Activated naive CD4-positive, alpha-beta T cell treated with anti-CD3 and anti-CD28 coated beads for 36 hours (primary cell): ENCODE measurements at regions of chr17 and their contacts with region 1.

Region 1: GRCh38 chr17:72725433-72726068 is 366.9 kb downstream of the SLC39A11 start:
- DNase-seq: peak; percentile 68
- H3K4me3 Mint-ChIP-seq: no peak overlapping the region
- H3K27ac Mint-ChIP-seq: no peak overlapping the region
- H3K4me1 Mint-ChIP-seq: peaks cover 28% of the 10 kb centered on the region
- H3K27me3 Mint-ChIP-seq: no peaks in the 10 kb centered on the region

Region 2: DNA sequence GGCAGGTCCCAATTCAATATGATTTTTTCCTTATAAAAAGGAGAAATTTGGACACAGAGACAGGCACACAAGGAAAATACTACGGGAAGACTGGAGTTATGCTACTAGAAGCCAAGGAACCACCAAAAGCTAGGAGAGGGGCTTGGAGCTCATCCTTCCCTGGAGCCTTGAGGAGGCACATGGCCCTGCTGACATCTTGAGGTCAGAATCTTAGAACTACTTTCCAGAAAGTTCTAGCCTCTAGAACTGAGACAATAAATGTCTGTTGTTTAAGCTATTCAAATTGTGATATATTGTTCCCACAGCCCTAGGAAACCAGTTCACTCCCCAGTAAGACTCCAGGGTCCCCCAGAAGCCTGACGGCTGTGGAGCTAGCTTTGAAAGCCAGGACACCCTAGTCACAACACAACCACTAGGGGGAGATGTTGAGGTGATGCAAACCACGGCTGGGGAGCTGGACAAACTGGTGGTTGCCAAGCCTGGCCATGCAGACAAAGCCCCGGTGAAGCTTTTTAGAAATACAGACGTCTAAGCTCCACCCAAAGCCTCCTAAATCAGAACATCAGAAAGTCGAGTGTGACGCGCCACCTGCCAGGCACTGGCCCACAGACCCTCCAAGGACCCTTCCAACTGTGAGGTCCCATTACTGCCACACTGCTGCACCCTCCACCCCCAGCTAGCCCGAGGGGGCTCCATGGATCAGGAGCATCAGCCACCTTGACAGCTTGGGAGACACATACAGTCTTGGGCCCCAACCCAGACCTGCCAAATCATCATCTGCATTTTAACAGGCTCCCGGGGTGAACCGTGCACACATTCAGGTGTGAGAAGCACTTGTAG is 260.6 kb after region 1 on chr17:
- CTCF ChIA-PET with region 1: interaction called, 25 read pairs
- intact Hi-C with region 1: loop called (anchors 1 kb)
- DNase-seq: peak; percentile 70
- H3K4me3 Mint-ChIP-seq: no peak overlapping the region
- H3K27ac Mint-ChIP-seq: no peak overlapping the region
- H3K4me1 Mint-ChIP-seq: no peaks in the 10 kb centered on the region
- H3K27me3 Mint-ChIP-seq: no peaks in the 10 kb centered on the region

Region 3: DNA sequence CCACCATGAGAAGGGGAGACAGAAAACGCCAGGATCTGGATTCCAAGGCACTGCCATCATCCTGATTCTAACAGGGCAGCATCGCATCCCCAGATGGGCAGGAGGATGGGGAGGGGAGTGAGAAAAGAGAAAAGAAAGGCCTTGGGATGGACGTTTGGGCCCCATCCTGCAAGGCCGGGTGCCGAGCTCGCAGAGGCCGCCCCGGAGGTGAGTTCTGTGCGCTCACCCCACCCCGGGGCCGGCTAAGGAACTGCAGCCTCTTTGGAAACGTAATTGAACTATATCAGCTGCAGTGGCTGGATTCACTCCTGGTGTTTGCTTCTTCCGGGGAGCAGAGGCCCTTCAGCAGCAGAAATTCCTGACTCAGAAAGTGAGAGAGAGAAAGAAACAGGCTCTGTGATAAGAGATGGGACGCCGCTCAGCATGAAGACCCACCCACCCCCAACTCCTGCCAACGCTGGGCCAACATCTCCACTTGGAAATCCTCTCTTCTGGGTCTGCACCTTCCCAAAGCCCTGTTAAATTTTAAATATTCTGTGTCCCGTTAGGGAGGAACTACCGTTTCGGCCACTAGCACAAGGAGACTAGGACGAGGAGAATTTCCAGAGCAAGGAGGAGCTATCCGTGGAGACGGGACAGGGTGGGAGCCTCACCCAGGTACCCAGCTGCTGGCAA is 430.8 kb after region 1 on chr17:
- CTCF ChIA-PET with region 1: interaction called, 62 read pairs
- intact Hi-C with region 1: loop called (anchors 1 kb)
- DNase-seq: peak; percentile 68
- H3K4me3 Mint-ChIP-seq: no peak overlapping the region
- H3K27ac Mint-ChIP-seq: no peak overlapping the region
- H3K4me1 Mint-ChIP-seq: peaks cover 10% of the 10 kb centered on the region
- H3K27me3 Mint-ChIP-seq: peaks cover 11% of the 10 kb centered on the region

Region 4: DNA sequence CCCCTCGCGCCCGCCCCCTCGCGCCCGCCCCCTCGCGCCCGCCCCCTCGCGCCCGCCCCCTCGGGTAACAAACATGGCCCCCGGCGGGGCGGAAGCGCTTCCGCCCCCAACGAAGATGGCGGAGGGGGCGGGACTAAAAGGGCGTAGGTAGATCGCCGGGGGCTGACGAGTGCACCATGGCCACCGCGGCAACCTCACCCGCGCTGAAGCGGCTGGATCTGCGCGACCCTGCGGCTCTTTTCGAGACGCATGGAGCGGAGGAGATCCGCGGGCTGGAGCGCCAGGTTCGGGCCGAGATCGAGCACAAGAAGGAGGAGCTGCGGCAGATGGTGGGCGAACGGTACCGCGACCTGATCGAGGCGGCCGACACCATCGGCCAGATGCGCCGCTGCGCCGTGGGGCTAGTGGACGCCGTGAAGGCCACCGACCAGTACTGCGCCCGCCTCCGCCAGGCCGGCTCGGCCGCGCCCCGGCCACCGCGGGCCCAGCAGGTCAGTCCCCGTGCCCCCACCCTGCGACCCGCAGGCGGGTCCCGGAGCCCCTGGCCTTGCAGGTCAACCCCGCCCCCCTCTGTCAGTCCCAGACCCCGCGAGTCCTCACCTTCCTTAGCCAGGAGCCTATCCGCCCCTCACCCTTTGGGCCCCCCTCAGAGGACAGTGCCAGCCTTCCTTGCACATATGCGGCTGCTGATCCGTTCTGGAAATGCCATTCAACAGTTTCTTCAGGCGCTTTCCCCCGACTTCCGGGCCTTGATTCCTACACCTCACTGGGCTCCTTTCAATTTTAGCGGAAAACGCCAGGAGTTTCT is 467.5 kb after region 1 on chr17 and contains the start of gene COG1:
- CTCF ChIA-PET with region 1: interaction called, 8 read pairs
- intact Hi-C with region 1: loop called (anchors 1 kb)
- DNase-seq: peak; percentile 91
- H3K4me3 Mint-ChIP-seq: peak within 1 kb of the TSS; percentile 95
- H3K27ac Mint-ChIP-seq: peak within 1 kb of the TSS; percentile 97
- H3K4me1 Mint-ChIP-seq: peaks cover 16% of the 10 kb centered on the region
- H3K27me3 Mint-ChIP-seq: no peaks in the 10 kb centered on the region
- total RNA-seq, gene COG1: 31.4 to 32.1 TPM

Region 5: GRCh38 chr17:73255671-73256181 is 530.2 kb after region 1 on chr17:
- CTCF ChIA-PET with region 1: interaction called, 34 read pairs
- intact Hi-C with region 1: loop called (anchors 1 kb)
- DNase-seq: peak; percentile 68
- H3K4me3 Mint-ChIP-seq: no peak overlapping the region
- H3K27ac Mint-ChIP-seq: no peak overlapping the region
- H3K4me1 Mint-ChIP-seq: no peaks in the 10 kb centered on the region
- H3K27me3 Mint-ChIP-seq: peaks cover 2% of the 10 kb centered on the region

Region 6: DNA sequence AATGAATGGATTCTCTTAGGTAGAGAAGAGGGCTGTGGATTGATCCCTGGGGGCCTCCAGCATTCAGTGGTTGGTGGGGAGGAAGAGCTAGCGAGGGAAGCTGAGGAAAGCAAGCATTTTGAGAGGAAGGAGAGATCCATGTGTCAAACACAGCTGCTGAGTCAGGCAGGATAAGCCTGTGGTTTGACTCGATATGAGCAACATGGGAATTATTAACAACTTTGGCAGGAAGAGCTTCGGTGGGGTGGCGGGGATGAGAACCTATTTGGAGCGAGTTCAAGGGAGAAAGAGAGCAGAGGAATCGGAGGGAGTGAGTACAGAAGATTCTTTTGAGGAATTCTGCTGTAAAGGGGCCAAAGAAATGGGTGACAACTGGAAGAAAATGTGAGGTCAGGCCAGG is 645.7 kb after region 1 on chr17:
- CTCF ChIA-PET with region 1: interaction called, 52 read pairs
- intact Hi-C with region 1: loop called (anchors 1 kb)
- DNase-seq: no peak
- H3K4me3 Mint-ChIP-seq: no peak overlapping the region
- H3K27ac Mint-ChIP-seq: no peak overlapping the region
- H3K4me1 Mint-ChIP-seq: no peaks in the 10 kb centered on the region
- H3K27me3 Mint-ChIP-seq: peaks cover 4% of the 10 kb centered on the region